ENCODE measurements at regions of chr1 and their contacts with region 1.

Region 1: DNA sequence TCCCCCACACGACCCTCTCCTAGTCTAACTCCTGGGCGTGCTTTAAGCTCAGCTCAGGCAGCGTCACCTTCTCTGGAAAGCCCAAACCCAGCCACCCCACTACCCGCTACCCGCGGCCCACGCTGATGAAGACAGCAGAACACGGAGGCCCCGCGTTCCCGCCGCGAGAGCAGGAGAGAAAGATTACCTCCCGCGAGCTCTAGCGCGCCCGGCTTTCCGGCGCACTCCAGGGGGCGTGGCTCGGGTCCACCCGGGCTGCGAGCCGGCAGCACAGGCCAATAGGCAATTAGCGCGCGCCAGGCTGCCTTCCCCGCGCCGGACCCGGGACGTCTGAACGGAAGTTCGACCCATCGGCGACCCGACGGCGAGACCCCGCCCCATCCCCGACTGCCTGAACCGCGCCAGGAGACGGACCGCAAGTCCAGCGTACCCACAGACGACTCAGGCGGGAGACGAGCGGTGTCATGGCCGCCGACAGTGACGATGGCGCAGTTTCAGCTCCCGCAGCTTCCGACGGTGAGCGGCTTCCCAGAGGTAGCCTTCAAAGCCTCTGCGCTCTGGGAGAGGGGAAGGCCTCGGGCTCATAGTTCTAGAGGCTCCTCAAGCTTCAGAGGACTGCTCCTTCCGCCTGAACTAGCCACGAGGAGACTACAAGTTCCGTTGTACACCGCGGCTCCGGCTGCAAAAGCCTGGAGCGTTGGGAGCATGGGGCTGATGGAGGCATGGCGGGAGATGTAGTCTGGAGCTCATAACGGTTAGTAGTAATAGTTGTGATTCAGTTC is at the starts of genes MUTYH and TOE1:
- DNase-seq: peak; percentile 96
- ATAC-seq: peak; percentile 87
- H3K4me3 Mint-ChIP-seq: peak within 1 kb of the TSS; percentile 98
- H3K27ac Mint-ChIP-seq: peak within 1 kb of the TSS; percentile 98
- H3K4me1 Mint-ChIP-seq: peaks cover 35% of the 10 kb centered on the region
- H3K27me3 Mint-ChIP-seq: no peaks in the 10 kb centered on the region
- total RNA-seq, gene MUTYH: 59.9 to 68.8 TPM
- total RNA-seq, gene TOE1: 20.4 to 22.2 TPM

Region 2: GRCh38 chr1:44807262-44808062 is 532.5 kb before region 1 on chr1 and contains the start of gene DYNLT4:
- POLR2A ChIA-PET with region 1: interaction called, 12 read pairs
- DNase-seq: peak; percentile 84
- ATAC-seq: peak; percentile 61
- H3K4me3 Mint-ChIP-seq: peak within 1 kb of the TSS; percentile 78
- H3K27ac Mint-ChIP-seq: peak within 1 kb of the TSS; percentile 99
- H3K4me1 Mint-ChIP-seq: peaks cover 55% of the 10 kb centered on the region
- H3K27me3 Mint-ChIP-seq: no peaks in the 10 kb centered on the region
- total RNA-seq, gene DYNLT4: 0.43 to 0.97 TPM

Region 3: GRCh38 chr1:45303582-45304310 is 36.2 kb before region 1 on chr1:
- POLR2A ChIA-PET with region 1: interaction called, 70 read pairs
- DNase-seq: peak; percentile 96
- ATAC-seq: peak; percentile 86
- H3K4me3 Mint-ChIP-seq: peak overlapping the region; percentile 90
- H3K27ac Mint-ChIP-seq: peak overlapping the region; percentile 96
- H3K4me1 Mint-ChIP-seq: peaks cover 28% of the 10 kb centered on the region
- H3K27me3 Mint-ChIP-seq: no peaks in the 10 kb centered on the region

Region 4: DNA sequence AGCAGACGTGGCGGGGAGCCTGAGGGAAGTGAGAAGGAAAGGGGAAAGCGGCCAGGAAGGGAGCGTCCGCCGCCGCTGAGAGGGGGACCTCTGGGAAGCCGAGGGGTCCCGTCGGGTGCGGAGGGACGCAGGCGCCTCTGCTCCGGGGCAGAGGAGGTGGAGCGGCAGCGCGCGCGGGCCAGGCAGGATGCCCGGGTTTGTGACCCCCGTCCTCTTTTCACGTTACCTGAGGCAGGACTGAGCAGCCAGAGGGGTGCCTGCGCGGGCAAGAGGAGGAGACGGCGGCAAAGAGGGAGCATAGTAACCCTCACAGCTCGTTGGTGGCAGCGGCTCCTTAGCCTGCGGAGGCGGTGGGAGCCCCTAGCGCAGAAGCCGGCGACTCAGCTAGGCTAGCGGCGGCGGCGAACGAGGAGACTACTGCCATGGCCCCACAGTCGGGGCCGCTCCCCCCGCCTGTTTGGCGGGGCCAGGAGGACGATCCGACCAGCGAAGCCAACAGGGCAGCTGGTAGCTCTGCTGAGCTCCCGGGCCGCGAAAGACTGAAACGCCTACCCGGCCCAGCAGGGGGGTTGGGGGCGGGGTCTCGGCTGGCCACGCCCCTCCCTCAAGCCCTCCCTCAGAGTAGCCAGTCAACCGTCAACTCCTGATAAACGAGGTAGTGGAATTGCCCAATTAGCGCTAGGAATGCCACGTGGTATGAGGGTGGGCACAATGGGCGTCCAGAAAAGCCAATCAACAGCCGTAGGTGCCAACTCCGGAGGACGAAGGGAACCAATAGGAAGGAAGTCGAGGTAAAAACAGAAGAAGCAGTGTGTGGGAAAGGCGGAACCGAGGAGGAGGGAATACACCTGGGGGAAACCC is 150.9 kb after region 1 on chr1 and contains the start of gene TESK2:
- POLR2A ChIA-PET with region 1: interaction called, 26 read pairs
- DNase-seq: peak; percentile 96
- ATAC-seq: peak; percentile 94
- H3K4me3 Mint-ChIP-seq: no peak within 1 kb of the TSS
- H3K27ac Mint-ChIP-seq: no peak within 1 kb of the TSS
- H3K4me1 Mint-ChIP-seq: peaks cover 9% of the 10 kb centered on the region
- H3K27me3 Mint-ChIP-seq: no peaks in the 10 kb centered on the region
- total RNA-seq, gene TESK2: 5.8 to 6.5 TPM

Region 5: DNA sequence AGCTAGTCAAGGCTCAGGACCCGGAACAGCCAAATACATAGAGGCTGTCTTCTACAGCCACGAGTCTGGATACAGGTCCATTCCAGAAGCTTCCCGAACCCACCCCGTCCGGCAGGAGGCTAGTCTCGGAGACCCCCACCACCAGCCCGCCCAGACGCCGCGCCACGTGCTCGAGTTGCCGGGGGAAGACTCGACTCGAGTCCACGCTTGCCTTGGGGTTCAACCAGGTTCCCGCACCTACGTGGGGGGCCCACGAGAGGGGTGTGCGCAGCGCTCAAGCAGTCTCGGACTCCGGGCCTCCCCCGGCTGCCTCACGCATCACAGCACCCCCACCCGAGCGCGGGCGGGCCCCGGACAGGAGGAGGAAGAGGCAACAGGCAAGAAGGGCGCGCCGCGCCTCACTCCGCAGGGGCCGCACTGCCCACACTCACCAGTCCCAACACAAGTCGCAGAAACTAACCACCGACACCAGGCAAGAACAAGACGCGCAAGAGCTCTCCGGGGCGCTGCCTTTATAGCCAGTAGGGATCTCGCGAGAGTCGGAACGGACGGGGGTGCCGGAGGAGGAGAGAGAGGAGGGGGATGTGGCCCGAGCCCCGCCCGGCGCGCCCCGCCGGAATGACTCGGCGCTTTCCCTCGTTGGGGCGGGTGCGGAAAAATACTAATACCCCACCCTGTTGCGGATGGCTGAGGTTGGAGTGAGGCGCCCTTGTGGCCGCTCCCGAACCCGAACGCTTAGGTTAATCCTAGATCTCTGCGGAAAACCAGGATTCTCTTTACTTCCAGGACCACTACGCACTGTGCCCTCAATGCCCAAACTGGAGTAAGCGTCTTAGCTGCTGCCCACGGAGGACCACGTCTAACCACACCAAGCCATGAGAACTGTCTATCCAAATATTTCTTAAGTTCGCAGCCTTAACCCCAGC is 181.7 kb after region 1 on chr1 and contains the start of gene PRDX1:
- POLR2A ChIA-PET with region 1: interaction called, 14 read pairs
- DNase-seq: peak; percentile 96
- ATAC-seq: peak; percentile 84
- H3K4me3 Mint-ChIP-seq: peak within 1 kb of the TSS; percentile 94
- H3K27ac Mint-ChIP-seq: peak within 1 kb of the TSS; percentile 85
- H3K4me1 Mint-ChIP-seq: peaks cover 26% of the 10 kb centered on the region
- H3K27me3 Mint-ChIP-seq: peaks cover 13% of the 10 kb centered on the region
- total RNA-seq, gene PRDX1: 159 to 180 TPM

Region 6: DNA sequence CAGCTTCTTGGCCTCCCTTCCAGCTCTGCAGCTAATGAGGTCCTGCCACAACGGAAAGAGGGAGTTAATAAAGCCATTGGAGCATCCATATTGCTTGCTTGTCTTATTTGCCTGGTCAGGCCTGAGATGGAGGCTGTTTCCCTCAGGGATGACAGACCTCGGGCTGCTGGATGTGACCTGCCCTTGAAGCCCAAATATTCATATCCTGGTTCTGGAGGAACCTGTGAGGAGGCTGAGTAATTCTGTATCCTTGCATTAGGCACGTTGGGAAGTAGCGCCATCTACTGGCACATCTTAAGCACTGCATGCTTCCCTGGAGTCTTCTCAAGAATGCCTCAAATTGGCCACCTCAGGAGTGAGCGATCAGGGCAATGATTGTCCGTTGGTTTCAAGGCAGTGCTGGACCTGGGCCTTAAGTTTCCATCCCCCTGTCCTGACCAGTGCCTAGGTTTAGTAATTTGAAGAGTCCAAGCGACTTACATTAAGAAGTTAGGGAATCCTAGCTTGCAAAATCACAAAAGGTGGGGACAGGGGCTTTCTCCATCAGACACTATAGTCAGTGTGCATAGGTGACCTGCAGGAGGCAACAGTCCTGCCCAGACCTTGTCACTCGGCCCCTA is 230.1 kb after region 1 on chr1:
- POLR2A ChIA-PET with region 1: no interaction called
- DNase-seq: peak; percentile 63
- ATAC-seq: peak; percentile 79
- H3K4me3 Mint-ChIP-seq: no peak overlapping the region
- H3K27ac Mint-ChIP-seq: no peak overlapping the region
- H3K4me1 Mint-ChIP-seq: peaks cover 2% of the 10 kb centered on the region
- H3K27me3 Mint-ChIP-seq: no peaks in the 10 kb centered on the region

Region 7: DNA sequence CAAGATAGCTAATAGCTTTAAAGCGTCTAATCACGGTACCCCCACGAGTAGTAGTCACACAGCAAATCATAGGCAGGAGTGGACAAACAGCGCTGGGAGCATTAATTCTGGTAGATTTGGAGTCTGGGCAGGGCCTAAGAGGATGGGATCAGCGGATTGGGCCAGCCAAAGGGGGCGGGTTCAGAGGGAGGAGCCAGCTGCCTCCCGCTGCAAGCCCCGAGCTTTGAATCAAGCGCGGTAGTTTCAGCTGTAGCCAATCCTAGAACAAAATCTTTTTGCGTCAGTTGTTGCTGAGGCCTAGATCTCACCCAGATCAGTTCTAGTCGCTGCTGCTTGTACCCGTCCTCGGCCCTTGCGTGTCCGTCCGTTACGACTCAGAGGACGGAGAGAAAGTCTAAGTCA is 243.3 kb after region 1 on chr1:
- POLR2A ChIA-PET with region 1: interaction called, 16 read pairs
- DNase-seq: peak; percentile 90
- ATAC-seq: peak; percentile 75
- H3K4me3 Mint-ChIP-seq: peak overlapping the region; percentile 93
- H3K27ac Mint-ChIP-seq: peak overlapping the region; percentile 100
- H3K4me1 Mint-ChIP-seq: peaks cover 23% of the 10 kb centered on the region
- H3K27me3 Mint-ChIP-seq: no peaks in the 10 kb centered on the region

Region 8: DNA sequence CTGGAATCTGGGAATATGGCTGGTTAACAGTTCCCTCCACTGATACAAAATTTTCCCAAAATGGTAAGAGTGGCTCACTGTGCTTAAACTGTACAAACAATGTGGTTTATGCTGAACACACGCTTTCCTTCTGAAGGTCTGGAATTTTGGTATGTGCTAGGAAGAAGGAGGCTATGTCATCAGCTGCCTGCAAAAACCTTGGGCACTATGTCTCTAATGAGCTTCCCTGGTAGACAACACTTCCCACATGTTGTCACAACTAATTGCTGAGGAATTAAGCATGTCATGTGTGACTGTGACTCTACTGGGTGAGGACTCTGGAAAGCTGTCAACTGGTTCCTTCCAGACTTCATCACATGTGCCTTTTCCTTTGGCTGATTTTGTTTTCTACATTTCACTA is 381.2 kb after region 1 on chr1:
- POLR2A ChIA-PET with region 1: no interaction called
- DNase-seq: no peak
- ATAC-seq: no peak
- H3K4me3 Mint-ChIP-seq: no peak overlapping the region
- H3K27ac Mint-ChIP-seq: no peak overlapping the region
- H3K4me1 Mint-ChIP-seq: no peaks in the 10 kb centered on the region
- H3K27me3 Mint-ChIP-seq: no peaks in the 10 kb centered on the region